ENCODE measurements at regions of chr18 and their contacts with region 1.

Region 1: GRCh38 chr18:49021433-49022129 is 70.8 kb upstream of the SMAD7 start:
- DNase-seq: peak; percentile 86 to 92
- H3K4me3 ChIP-seq: peak overlapping the region; percentile 56
- H3K27ac ChIP-seq: peak overlapping the region; percentile 64
- H3K4me1 ChIP-seq: peaks cover 35% of the 10 kb centered on the region
- H3K27me3 ChIP-seq: no peaks in the 10 kb centered on the region
- CTCF ChIP-seq: peak; percentile 76

Region 2: GRCh38 chr18:48675352-48675761 is 346.2 kb before region 1 on chr18:
- CTCF ChIA-PET with region 1: no interaction called
- POLR2A ChIA-PET with region 1: no interaction called
- intact Hi-C with region 1: loop called (anchors 5 kb)
- DNase-seq: peak; percentile 68 to 71
- H3K4me3 ChIP-seq: no peak overlapping the region
- H3K27ac ChIP-seq: no peak overlapping the region
- H3K4me1 ChIP-seq: no peaks in the 10 kb centered on the region
- H3K27me3 ChIP-seq: no peaks in the 10 kb centered on the region
- CTCF ChIP-seq: peak; percentile 89

Region 3: DNA sequence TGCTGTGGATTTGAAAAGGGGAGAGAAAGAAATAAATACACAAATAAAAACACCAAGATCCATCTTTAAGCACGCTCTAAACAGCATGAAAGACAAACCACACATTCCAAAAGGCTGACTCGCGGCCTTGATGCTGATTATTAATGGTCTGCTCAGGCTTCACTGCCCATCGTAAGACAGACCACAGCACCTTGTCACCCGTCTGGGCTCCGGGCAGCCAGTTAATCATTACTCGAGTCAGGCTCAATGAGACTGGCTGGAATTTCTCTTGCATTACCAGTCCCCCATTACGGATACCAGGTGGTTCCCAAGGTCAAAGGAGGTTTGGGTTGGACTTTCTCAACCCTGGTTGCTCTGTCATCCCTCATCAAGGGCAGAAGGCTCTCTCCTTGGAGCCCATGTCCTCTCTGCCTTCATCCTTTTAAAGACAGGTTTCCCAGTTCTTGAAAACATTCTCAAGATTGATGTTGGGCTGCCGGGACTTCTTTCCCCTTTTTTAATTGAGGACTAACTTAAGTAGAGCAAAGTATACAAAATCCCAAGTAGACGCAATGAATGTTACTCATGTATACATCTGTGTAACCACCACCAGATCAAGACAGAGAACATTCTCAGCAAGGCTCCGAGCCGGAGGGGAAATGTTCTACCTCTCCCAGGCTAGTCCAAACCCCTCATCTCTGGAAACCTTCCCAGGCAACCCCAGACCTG is 78.9 kb before region 1 on chr18:
- CTCF ChIA-PET with region 1: interaction called, 4 read pairs
- POLR2A ChIA-PET with region 1: no interaction called
- intact Hi-C with region 1: loop called (anchors 2 kb)
- DNase-seq: peak; percentile 75 to 95
- H3K4me3 ChIP-seq: no peak overlapping the region; the same call in 1 of the 2 replicates
- H3K27ac ChIP-seq: peak overlapping the region; percentile 42
- H3K4me1 ChIP-seq: peaks cover 94% of the 10 kb centered on the region
- H3K27me3 ChIP-seq: no peaks in the 10 kb centered on the region
- CTCF ChIP-seq: no peak

Region 4: GRCh38 chr18:48997985-48998831 is 23.4 kb before region 1 on chr18:
- CTCF ChIA-PET with region 1: interaction called, 3 read pairs
- POLR2A ChIA-PET with region 1: interaction called, 8 read pairs
- intact Hi-C with region 1: loop called (anchors 1 kb)
- DNase-seq: peak; percentile 91 to 98
- H3K4me3 ChIP-seq: peak overlapping the region; percentile 32; the same call in 1 of the 2 replicates
- H3K27ac ChIP-seq: peak overlapping the region; percentile 97
- H3K4me1 ChIP-seq: peaks cover 60% of the 10 kb centered on the region
- H3K27me3 ChIP-seq: no peaks in the 10 kb centered on the region
- CTCF ChIP-seq: no peak

Region 5: DNA sequence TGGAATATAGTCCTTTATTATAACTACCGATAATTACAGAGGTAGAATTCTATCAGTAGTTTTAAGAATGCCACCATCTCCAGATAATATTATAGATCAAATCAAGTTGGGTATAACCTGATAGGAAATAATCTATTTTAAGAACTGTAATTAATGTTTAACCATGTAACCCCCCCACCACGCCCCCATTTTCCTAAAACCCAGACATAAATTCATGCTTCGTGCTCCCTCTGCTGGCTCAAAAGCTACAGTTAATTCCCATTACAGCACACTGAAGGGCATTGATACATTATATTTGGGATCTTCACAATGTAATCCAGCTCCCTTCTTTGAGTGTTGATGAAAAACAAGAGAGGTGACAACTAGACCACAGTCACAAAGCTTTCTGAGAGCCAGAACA is 157.2 kb after region 1 on chr18:
- CTCF ChIA-PET with region 1: no interaction called
- POLR2A ChIA-PET with region 1: no interaction called
- intact Hi-C with region 1: loop called (anchors 10 kb)
- DNase-seq: no peak
- H3K4me3 ChIP-seq: no peak overlapping the region
- H3K27ac ChIP-seq: no peak overlapping the region
- H3K4me1 ChIP-seq: 0 out of 2 replicates have a peak, but pooled peaks cover 5% of the 10 kb centered on the region
- H3K27me3 ChIP-seq: no peaks in the 10 kb centered on the region
- CTCF ChIP-seq: peak; percentile 73